BJ (cell line): ENCODE measurements at regions of chr9 and their contacts with region 1.

Region 1: DNA sequence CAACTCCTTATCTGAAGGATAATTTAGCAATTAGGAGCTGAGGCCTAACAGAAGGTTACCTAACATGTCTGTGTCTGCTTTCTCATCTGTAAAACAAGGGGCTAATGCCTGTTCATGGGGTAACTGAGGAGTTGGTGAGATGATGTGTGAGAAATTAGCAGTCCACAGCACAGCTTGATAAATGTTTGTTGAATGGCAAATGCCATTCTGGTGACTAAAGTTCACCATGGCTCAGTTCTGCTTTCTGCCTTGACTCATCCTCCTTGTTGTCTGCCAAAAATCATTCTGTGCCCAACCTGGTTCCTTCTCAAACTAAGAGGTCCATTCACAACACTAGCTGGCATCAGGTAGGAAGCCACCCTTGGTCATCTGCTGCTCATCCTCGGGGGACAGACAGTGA is 552.0 kb upstream of the KLF4 start:
- DNase-seq: no peak
- H3K4me3 ChIP-seq: no peak overlapping the region
- H3K27me3 ChIP-seq: no peaks in the 10 kb centered on the region
- CTCF ChIP-seq: no peak

Region 2: DNA sequence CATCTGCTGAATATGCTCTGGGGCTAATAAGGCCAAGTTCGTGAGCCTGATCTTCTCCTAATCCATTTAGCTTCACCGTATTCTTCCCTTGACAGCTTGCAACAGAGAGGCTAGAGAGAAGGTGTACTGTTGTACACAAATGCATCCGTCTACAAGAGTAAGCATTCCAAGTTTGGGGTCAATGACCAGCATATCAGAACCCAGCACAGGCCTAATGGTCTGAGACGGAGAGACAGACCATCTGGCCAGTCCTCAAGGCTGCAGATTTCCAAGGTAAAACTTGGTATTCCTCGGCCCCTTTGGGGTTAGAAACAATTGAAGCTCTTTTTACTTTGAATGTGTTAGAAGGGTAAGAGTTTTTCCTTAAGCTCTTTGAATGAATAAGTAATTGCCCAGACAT is 70.8 kb before region 1 on chr9:
- CTCF ChIA-PET with region 1: no interaction called
- POLR2A ChIA-PET with region 1: interaction called, 10 read pairs
- DNase-seq: no peak
- H3K4me3 ChIP-seq: no peak overlapping the region
- H3K27me3 ChIP-seq: peaks cover 5% of the 10 kb centered on the region
- CTCF ChIP-seq: no peak

Region 3: GRCh38 chr9:109520478-109521132 is 1479.1 kb after region 1 on chr9:
- CTCF ChIA-PET with region 1: no interaction called
- POLR2A ChIA-PET with region 1: no interaction called
- DNase-seq: peak; percentile 4
- H3K4me3 ChIP-seq: no peak overlapping the region
- H3K27me3 ChIP-seq: peaks cover 7% of the 10 kb centered on the region
- CTCF ChIP-seq: peak; percentile 92